Activated T-helper 1 cell treated with anti-CD3 and anti-CD28 coated beads, Interleukin-12 subunit alpha, Interleukin-12 subunit beta, Interleukin-2, Interleukin-4 antibody, amounts not matched to agents 30 ng/mL and 10 ng/mL and 1 ng/mL, durations not matched to agents 14 hours and 24 hours and 36 hours (primary cell): ENCODE measurements at regions of chr5 and their contacts with region 1.

Region 1: GRCh38 chr5:65035211-65036206 is 266.8 kb downstream of the CWC27 start:
- DNase-seq: peak; percentile 69
- H3K4me3 Mint-ChIP-seq: peak overlapping the region; percentile 84
- H3K27ac Mint-ChIP-seq: peak overlapping the region; percentile 88
- H3K4me1 Mint-ChIP-seq: peaks cover 35% of the 10 kb centered on the region
- H3K27me3 Mint-ChIP-seq: no peaks in the 10 kb centered on the region

Region 2: GRCh38 chr5:64595031-64595855 is 440.3 kb before region 1 on chr5:
- intact Hi-C with region 1: no loop called
- DNase-seq: no peak
- H3K4me3 Mint-ChIP-seq: no peak overlapping the region
- H3K27ac Mint-ChIP-seq: no peak overlapping the region
- H3K4me1 Mint-ChIP-seq: no peaks in the 10 kb centered on the region
- H3K27me3 Mint-ChIP-seq: peaks cover 4% of the 10 kb centered on the region

Region 3: GRCh38 chr5:64768358-64769312 is 266.9 kb before region 1 on chr5 and contains the starts of genes CWC27 and SREK1IP1:
- intact Hi-C with region 1: loop called (anchors 1 kb)
- DNase-seq: peak; percentile 79
- H3K4me3 Mint-ChIP-seq: peak within 1 kb of the TSS; percentile 98
- H3K27ac Mint-ChIP-seq: peak within 1 kb of the TSS; percentile 96
- H3K4me1 Mint-ChIP-seq: peaks cover 51% of the 10 kb centered on the region
- H3K27me3 Mint-ChIP-seq: no peaks in the 10 kb centered on the region
- total RNA-seq, gene CWC27: 29.1 and 33.5 TPM in 2 replicates
- total RNA-seq, gene SREK1IP1: 29.4 and 31.7 TPM in 2 replicates

Region 4: GRCh38 chr5:65076251-65076869 is 40.9 kb after region 1 on chr5:
- intact Hi-C with region 1: loop called (anchors 2 kb)
- DNase-seq: peak; percentile 44
- H3K4me3 Mint-ChIP-seq: no peak overlapping the region
- H3K27ac Mint-ChIP-seq: no peak overlapping the region
- H3K4me1 Mint-ChIP-seq: peaks cover 21% of the 10 kb centered on the region
- H3K27me3 Mint-ChIP-seq: peaks cover 18% of the 10 kb centered on the region

Region 5: GRCh38 chr5:65093936-65094675 is 58.6 kb after region 1 on chr5:
- intact Hi-C with region 1: no loop called
- DNase-seq: no peak
- H3K4me3 Mint-ChIP-seq: no peak overlapping the region
- H3K27ac Mint-ChIP-seq: no peak overlapping the region
- H3K4me1 Mint-ChIP-seq: no peaks in the 10 kb centered on the region
- H3K27me3 Mint-ChIP-seq: peaks cover 5% of the 10 kb centered on the region

Region 6: GRCh38 chr5:65172486-65173129 is 137.1 kb after region 1 on chr5:
- intact Hi-C with region 1: loop called (anchors 1 kb)
- DNase-seq: no peak
- H3K4me3 Mint-ChIP-seq: no peak overlapping the region
- H3K27ac Mint-ChIP-seq: no peak overlapping the region
- H3K4me1 Mint-ChIP-seq: peaks cover 6% of the 10 kb centered on the region
- H3K27me3 Mint-ChIP-seq: peaks cover 9% of the 10 kb centered on the region

Region 7: DNA sequence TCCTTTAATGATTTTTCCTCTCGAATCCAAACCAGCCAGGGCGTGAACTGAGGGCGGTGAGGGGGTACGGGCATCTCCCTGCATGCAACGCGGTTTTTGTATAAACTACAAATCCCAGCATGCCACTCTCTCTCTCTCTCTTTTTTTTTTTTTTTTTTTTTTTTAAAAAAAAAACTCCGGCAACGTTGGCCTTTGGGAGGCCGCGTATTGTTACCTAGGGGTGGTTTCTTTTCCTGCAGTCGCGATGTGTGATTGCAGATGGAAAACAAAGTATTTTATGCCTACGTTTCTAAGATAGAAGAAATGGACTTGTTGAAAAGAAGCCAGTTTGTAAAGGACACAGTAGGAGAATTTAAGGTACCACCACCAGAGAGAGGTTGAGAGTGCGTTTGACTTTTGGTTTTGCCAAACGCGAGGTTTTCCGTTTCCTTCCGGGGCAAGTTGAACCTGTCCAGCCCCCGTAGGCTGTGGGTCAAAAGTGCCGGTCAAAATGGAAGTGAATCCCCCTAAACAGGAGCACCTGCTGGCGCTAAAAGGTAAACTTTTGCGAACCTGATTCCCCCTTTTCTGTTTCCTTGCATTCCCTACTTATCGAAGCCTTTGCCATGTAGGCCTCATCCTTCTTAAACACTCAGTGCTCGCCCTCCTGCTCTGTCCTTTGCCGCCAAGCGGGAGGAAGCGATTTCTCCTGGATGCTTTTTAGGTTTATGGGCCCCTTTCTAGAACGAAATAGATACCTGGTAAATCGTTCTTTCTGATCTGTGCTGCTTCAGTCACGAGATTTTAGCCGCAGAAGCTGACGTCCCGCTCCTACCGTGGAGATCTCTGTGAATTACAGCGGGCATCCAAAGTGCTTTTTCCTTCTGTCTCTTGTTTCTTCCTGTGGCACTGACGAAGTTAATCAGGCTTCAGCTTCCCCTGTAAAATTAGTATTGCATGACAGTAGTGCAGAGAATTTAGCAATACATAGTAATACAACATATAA is 589.4 kb after region 1 on chr5 and contains the starts of genes SHLD3 and TRAPPC13:
- intact Hi-C with region 1: loop called (anchors 5 kb)
- DNase-seq: peak; percentile 81
- H3K4me3 Mint-ChIP-seq: peak within 1 kb of the TSS; percentile 94
- H3K27ac Mint-ChIP-seq: peak within 1 kb of the TSS; percentile 96
- H3K4me1 Mint-ChIP-seq: peaks cover 33% of the 10 kb centered on the region
- H3K27me3 Mint-ChIP-seq: no peaks in the 10 kb centered on the region
- total RNA-seq, gene SHLD3: 6.5 and 7.6 TPM in 2 replicates
- total RNA-seq, gene TRAPPC13: 21.7 and 23.7 TPM in 2 replicates

Region 8: DNA sequence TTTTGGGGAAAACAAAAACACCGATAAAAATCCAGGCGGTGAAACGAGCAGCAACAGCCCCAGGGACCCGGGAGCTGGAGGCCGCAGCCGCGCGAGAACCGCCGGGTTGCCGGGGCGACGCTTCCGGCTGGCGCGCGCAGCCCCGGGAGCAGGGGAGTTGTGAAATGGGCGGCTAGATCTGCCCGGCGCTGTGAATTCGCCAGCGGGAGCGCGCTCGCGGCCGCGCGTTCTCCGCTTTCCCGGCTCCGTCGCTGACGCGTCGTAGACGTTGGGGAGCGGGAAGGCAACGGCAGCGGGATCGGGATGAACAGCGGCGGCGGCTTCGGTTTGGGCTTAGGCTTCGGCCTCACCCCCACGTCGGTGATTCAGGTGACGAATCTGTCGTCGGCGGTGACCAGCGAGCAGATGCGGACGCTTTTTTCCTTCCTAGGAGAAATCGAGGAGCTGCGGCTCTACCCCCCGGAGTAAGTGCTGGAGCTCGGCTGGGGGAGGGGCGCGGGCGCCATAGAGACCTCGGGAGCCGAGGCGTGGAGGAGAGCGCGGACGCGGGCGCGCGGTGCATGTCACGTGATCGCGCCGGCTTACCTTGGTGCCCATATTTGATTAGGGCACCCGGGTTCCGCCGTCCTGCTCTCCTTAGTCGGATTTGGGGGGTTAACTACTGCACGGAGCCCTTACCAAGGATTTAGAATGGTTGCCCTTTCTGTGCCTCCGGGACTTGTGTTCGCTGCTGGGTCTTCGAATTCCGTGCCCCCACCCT is 1108.7 kb after region 1 on chr5 and contains the start of gene SREK1:
- intact Hi-C with region 1: loop called (anchors 10 kb)
- DNase-seq: peak; percentile 84
- H3K4me3 Mint-ChIP-seq: peak within 1 kb of the TSS; percentile 96
- H3K27ac Mint-ChIP-seq: peak within 1 kb of the TSS; percentile 99
- H3K4me1 Mint-ChIP-seq: peaks cover 47% of the 10 kb centered on the region
- H3K27me3 Mint-ChIP-seq: peaks cover 2% of the 10 kb centered on the region
- total RNA-seq, gene SREK1: 72.0 and 76.7 TPM in 2 replicates

Region 9: DNA sequence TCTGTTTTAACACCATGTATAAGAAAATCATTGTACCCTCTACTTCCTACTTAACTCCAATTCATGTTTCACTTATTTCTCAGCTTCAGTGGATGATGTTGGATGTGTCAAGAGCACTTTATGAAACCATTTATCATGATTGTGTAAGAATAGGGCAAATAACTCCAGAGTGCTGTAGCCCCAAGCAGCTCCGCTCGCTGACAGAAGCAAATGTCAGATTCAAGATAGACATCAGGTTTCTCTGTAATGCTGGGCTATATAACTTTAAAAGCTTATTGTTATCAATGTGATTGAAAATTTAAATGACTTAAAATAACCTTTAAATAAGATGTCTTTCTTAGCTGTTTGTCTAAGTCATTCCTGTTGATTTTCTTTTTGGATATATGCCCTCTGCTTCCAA is 1611.1 kb after region 1 on chr5:
- intact Hi-C with region 1: no loop called
- DNase-seq: no peak
- H3K4me3 Mint-ChIP-seq: no peak overlapping the region
- H3K27ac Mint-ChIP-seq: no peak overlapping the region
- H3K4me1 Mint-ChIP-seq: peaks cover 12% of the 10 kb centered on the region
- H3K27me3 Mint-ChIP-seq: peaks cover 12% of the 10 kb centered on the region